ENCODE measurements at regions of chr15 and their contacts with region 1.

Region 1: GRCh38 chr15:22850055-22850454 is 11.6 kb downstream of the NIPA2 start:
- DNase-seq: no peak
- H3K4me3 Mint-ChIP-seq: no peak overlapping the region
- H3K27ac Mint-ChIP-seq: peak overlapping the region; percentile 16
- H3K4me1 Mint-ChIP-seq: peaks cover 17% of the 10 kb centered on the region
- H3K27me3 Mint-ChIP-seq: no peaks in the 10 kb centered on the region

Region 2: DNA sequence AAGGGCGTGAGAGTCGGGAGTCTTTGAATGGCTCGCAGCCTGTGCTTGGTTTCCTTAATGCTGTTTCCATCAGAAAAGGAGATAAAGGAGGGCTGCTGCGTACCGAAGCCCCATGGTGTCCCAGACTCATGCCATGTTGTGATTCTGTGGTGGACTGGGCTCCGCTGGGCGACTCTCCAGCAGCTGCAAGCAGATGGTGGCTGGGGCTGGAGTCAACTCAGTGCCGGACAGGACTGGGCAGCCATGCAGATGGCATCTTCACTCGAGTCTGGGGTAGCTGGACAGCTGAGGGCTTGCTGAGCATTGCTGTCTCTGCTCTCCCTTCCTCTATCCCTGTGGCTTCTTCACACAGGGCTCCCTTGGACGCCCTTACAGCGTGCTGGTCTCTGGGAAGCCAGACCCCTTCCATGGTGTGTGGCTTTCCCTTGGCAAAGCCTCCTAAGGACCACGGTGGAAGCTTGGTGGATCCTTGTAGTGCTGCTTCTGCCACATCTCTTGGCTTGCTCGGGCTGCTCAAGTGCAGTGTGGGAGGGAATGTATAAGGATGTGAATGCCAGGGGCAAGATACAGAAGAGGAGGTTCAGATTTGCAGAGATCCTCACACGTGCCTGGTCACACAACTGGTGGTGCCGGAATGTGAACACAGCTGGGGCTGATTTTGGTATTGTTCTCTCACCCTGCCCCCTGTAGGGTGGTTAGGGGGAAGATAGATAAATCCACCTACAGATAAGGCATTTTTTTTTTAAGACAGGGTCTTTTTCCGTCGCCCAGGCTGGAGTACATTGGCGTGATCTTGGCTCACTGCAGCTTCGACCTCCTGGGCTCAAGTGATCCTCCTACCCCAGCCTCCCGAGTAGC is 54.6 kb before region 1 on chr15:
- intact Hi-C with region 1: no loop called
- DNase-seq: no peak
- H3K4me3 Mint-ChIP-seq: no peak overlapping the region
- H3K27ac Mint-ChIP-seq: peak overlapping the region; percentile 38
- H3K4me1 Mint-ChIP-seq: peaks cover 32% of the 10 kb centered on the region
- H3K27me3 Mint-ChIP-seq: no peaks in the 10 kb centered on the region

Region 3: GRCh38 chr15:22952796-22953579 is 102.9 kb after region 1 on chr15:
- intact Hi-C with region 1: loop called (anchors 10 kb)
- DNase-seq: no peak
- H3K4me3 Mint-ChIP-seq: no peak overlapping the region
- H3K27ac Mint-ChIP-seq: no peak overlapping the region
- H3K4me1 Mint-ChIP-seq: peaks cover 9% of the 10 kb centered on the region
- H3K27me3 Mint-ChIP-seq: peaks cover 8% of the 10 kb centered on the region

Region 4: GRCh38 chr15:23003736-23004135 is 153.7 kb after region 1 on chr15:
- intact Hi-C with region 1: no loop called
- DNase-seq: no peak
- H3K4me3 Mint-ChIP-seq: no peak overlapping the region
- H3K27ac Mint-ChIP-seq: no peak overlapping the region
- H3K4me1 Mint-ChIP-seq: no peaks in the 10 kb centered on the region
- H3K27me3 Mint-ChIP-seq: no peaks in the 10 kb centered on the region

Measured in activated T-helper 2 cell treated with anti-CD3 and anti-CD28 coated beads, Interferon-gamma antibody, Interleukin-2, Interleukin-4, amounts not matched to agents 10 μg/mL and 5 μg/mL and 100 μg/mL, durations not matched to agents 14 hours and 24 hours and 36 hours (primary cell).